A673 (cell line): ENCODE measurements at regions of chr4 and their contacts with region 1.

Region 1: DNA sequence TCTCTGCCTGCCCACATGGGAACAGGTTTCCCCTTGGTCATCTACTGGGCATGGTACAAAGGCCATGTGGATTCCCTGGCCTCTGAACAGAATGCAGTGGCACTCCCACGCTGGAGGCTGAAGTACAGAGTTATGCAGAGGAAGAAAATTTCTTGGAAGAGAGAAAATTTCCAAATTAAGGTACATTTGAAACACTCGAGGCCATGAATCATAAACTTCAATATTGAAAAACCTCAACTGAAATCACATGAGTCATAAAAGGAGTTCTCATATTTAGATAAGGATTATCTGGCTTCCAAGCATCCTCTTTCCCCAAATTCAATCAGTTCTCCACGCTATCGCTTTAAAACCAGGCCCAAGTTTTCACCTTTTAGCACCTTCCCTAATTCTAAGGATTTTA is 28.1 kb upstream of the TXK start:
- DNase-seq: no peak
- H3K4me3 ChIP-seq: peak overlapping the region; percentile 27
- H3K27ac ChIP-seq: peak overlapping the region; percentile 80
- H3K4me1 ChIP-seq: peaks cover 27% of the 10 kb centered on the region
- H3K27me3 ChIP-seq: no peaks in the 10 kb centered on the region
- CTCF ChIP-seq: no peak

Region 2: DNA sequence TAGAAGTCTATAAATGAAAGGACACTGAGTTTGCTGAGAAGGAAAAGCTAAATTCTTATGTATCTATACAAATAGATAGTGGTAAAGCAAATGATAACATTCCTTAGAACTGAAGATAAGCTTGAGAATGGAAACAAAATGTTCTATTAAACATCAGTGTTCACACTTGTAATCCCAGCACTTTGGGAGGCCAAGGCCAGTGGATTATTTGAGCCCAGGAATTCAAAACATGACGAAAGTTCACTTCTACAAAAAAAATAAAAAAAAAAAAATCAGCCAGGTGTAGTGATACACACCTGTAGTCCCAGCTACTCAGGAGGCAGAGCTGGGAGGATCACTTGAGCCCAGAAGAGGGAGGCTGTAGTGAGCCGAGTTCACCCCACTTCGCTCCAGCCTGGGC is 898.4 kb before region 1 on chr4:
- CTCF ChIA-PET with region 1: no interaction called
- POLR2A ChIA-PET with region 1: no interaction called
- intact Hi-C with region 1: no loop called
- DNase-seq: no peak
- H3K4me3 ChIP-seq: no peak overlapping the region
- H3K27ac ChIP-seq: no peak overlapping the region
- H3K4me1 ChIP-seq: no peaks in the 10 kb centered on the region
- H3K27me3 ChIP-seq: no peaks in the 10 kb centered on the region
- CTCF ChIP-seq: no peak

Region 3: GRCh38 chr4:48269861-48270522 is 107.8 kb after region 1 on chr4:
- CTCF ChIA-PET with region 1: no interaction called
- POLR2A ChIA-PET with region 1: no interaction called
- intact Hi-C with region 1: loop called (anchors 5 kb)
- DNase-seq: peak; percentile 90
- H3K4me3 ChIP-seq: peak overlapping the region; percentile 68
- H3K27ac ChIP-seq: no peak overlapping the region
- H3K4me1 ChIP-seq: no peaks in the 10 kb centered on the region
- H3K27me3 ChIP-seq: no peaks in the 10 kb centered on the region
- CTCF ChIP-seq: peak; percentile 39; the same call in 1 of the 2 replicates